Mammary epithelial cell (primary cell): ENCODE measurements at regions of chr7 and their contacts with region 1.

Region 1: DNA sequence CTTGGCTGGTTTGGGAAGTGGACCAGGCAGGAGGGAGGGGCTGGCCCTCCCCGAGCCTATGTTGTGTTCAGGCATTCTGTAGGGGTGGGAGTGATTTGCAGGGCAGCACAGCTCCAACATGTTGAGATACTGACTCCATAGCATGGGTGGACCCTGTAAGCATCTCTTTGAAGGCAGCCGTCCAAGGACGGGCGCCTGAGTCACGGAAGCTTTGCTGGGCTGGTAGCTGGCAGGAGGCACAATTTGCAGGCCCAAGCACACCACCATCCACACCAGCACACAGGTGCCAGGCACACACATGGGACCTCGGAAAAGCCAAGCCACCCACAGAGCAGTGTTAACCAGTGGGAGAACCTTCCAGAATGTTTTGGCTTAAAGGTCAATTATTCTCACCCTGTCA is 505.1 kb upstream of the FOXK1 start:
- DNase-seq: peak; percentile 80
- H3K4me3 ChIP-seq: no peak overlapping the region
- H3K27ac ChIP-seq: no peak overlapping the region
- H3K4me1 ChIP-seq: no peaks in the 10 kb centered on the region
- H3K27me3 ChIP-seq: no peaks in the 10 kb centered on the region
- CTCF ChIP-seq: no peak

Region 2: GRCh38 chr7:3980300-3980643 is 196.7 kb before region 1 on chr7:
- CTCF ChIA-PET with region 1: no interaction called
- dilution Hi-C with region 1: no loop called
- in situ Hi-C with region 1: no loop called
- intact Hi-C with region 1: no loop called
- DNase-seq: no peak
- H3K4me3 ChIP-seq: no peak overlapping the region
- H3K27ac ChIP-seq: no peak overlapping the region
- H3K4me1 ChIP-seq: no peaks in the 10 kb centered on the region
- H3K27me3 ChIP-seq: no peaks in the 10 kb centered on the region
- CTCF ChIP-seq: no peak

Region 3: GRCh38 chr7:4042402-4043045 is 134.5 kb before region 1 on chr7:
- CTCF ChIA-PET with region 1: no interaction called
- dilution Hi-C with region 1: no loop called
- in situ Hi-C with region 1: no loop called
- intact Hi-C with region 1: no loop called
- DNase-seq: peak; percentile 11
- H3K4me3 ChIP-seq: no peak overlapping the region
- H3K27ac ChIP-seq: no peak overlapping the region
- H3K4me1 ChIP-seq: no peaks in the 10 kb centered on the region
- H3K27me3 ChIP-seq: no peaks in the 10 kb centered on the region
- CTCF ChIP-seq: no peak

Region 4: GRCh38 chr7:4188651-4189050 is 11.7 kb after region 1 on chr7:
- CTCF ChIA-PET with region 1: no interaction called
- dilution Hi-C with region 1: no loop called
- in situ Hi-C with region 1: no loop called
- intact Hi-C with region 1: loop called (anchors 1 kb)
- DNase-seq: no peak
- H3K4me3 ChIP-seq: no peak overlapping the region
- H3K27ac ChIP-seq: no peak overlapping the region
- H3K4me1 ChIP-seq: no peaks in the 10 kb centered on the region
- H3K27me3 ChIP-seq: no peaks in the 10 kb centered on the region
- CTCF ChIP-seq: no peak

Region 5: DNA sequence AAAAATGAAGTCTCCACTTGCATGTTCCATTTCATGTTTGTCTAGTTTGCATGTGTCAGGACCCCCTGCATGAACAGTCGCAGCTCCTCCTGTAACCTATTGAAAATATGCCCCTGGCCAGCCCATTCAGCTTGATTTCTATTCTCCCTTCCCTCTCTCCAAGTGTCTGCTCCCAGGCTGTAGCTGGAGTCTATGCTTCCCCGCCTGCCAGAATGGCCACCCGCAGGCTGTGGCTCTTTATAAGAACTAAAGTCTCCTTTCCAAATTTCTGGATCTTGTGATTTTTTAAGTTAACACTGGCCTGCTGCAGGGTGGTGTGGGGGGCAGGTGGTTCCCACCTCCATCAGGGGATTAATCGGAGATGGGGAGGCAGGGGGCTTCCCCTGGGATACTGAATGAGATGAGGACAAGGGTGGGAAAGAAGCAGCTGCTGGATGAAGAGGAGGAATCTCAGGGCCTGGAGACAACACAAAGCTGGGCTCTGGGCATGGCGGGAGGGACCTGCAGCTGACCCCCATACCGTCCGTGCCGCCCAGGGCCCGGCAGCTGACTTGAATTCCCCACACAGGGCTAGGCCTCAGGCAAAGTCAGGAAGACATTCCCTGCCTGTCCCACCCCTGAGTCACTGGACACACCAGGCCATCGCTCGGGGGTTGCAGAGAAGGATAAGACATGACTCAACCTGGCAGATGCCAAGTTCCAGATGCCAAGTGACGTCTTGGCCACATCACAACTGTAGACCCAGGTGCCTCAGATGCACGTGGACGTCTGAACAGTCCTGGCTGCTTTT is 105.6 kb after region 1 on chr7:
- CTCF ChIA-PET with region 1: no interaction called
- dilution Hi-C with region 1: no loop called
- in situ Hi-C with region 1: no loop called
- intact Hi-C with region 1: loop called (anchors 10 kb)
- DNase-seq: peak; percentile 95
- H3K4me3 ChIP-seq: no peak overlapping the region
- H3K27ac ChIP-seq: no peak overlapping the region
- H3K4me1 ChIP-seq: no peaks in the 10 kb centered on the region
- H3K27me3 ChIP-seq: no peaks in the 10 kb centered on the region
- CTCF ChIP-seq: no peak

Region 6: DNA sequence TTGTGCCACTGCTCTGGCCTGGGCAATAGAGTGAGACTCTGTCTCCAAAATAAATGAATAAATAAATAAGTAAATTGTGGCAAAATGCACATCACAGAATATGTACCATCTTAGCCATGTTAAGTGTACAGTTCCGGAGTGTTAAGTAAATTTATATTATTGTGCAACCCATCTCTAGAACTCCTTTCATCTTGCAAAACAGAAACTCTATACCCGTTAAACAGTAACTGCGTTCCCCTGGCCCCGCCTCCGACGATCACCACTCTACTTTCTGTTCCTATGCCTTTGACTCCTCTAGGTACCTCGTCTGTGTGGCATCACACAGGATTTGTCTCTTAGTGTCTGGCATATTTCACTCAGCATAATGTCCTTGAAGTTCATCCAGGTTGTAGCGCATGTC is 148.7 kb after region 1 on chr7:
- CTCF ChIA-PET with region 1: no interaction called
- dilution Hi-C with region 1: no loop called
- in situ Hi-C with region 1: no loop called
- intact Hi-C with region 1: no loop called
- DNase-seq: no peak
- H3K4me3 ChIP-seq: no peak overlapping the region
- H3K27ac ChIP-seq: no peak overlapping the region
- H3K4me1 ChIP-seq: no peaks in the 10 kb centered on the region
- H3K27me3 ChIP-seq: no peaks in the 10 kb centered on the region
- CTCF ChIP-seq: no peak

Region 7: DNA sequence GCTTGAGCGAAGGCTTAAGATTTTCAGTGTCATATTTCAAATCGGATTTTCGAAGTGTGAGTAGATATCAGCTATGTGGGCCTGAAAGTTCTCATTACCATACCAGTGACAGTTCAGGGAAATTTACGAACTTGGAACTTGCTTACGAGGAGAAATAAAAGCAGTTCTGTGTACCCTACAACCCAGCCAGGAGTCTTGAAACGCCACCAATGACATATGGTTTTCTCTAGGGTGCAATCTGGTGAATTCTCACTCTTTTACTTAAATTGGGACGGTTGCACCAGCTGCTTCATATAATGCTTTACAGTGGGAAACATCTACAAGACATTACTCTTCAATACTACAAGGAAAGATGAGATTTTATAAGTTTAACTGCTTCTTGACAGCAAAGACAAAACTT is 251.5 kb after region 1 on chr7:
- CTCF ChIA-PET with region 1: no interaction called
- dilution Hi-C with region 1: no loop called
- in situ Hi-C with region 1: no loop called
- intact Hi-C with region 1: no loop called
- DNase-seq: no peak
- H3K4me3 ChIP-seq: no peak overlapping the region
- H3K27ac ChIP-seq: no peak overlapping the region
- H3K4me1 ChIP-seq: no peaks in the 10 kb centered on the region
- H3K27me3 ChIP-seq: no peaks in the 10 kb centered on the region
- CTCF ChIP-seq: no peak